Endothelial cell of umbilical vein (primary cell): ENCODE measurements at regions of chr5 and their contacts with region 1.

Region 1: DNA sequence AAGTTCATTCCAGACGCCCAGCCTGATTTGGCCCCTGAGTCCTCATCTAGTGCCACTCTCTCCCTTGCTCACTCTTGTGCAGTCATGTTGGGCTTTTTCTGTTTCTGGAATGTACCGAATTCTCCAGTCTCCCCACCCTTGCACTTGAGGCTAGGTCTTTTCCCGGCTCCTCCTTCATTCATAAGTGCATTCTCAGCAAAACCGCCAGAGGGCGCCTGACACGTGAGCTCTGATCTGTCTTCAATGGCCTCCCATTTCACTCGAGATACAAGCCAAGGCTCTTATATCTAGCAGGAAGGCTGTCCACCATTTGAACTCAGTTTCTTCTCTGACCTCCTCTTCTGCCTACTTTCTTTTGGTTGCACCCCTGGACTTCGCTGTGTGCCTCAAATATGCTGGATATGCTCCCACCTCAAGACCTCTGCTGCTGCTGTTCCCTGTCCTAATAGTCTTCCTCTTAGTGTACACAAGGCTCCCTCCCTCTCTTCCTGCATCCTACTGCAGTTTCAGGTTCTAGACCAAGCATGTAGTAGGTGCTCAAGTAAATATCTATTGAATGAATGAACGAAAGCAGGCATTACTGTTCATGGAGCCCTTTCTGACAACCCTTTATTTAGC is 568.1 kb upstream of the WWC1 start:
- DNase-seq: peak; percentile 61
- H3K4me3 ChIP-seq: no peak overlapping the region
- H3K27ac ChIP-seq: no peak overlapping the region
- H3K4me1 ChIP-seq: no peaks in the 10 kb centered on the region
- H3K27me3 ChIP-seq: no peaks in the 10 kb centered on the region
- CTCF ChIP-seq: peak; percentile 79 to 86
- POLR2A ChIP-seq: no peak

Region 2: DNA sequence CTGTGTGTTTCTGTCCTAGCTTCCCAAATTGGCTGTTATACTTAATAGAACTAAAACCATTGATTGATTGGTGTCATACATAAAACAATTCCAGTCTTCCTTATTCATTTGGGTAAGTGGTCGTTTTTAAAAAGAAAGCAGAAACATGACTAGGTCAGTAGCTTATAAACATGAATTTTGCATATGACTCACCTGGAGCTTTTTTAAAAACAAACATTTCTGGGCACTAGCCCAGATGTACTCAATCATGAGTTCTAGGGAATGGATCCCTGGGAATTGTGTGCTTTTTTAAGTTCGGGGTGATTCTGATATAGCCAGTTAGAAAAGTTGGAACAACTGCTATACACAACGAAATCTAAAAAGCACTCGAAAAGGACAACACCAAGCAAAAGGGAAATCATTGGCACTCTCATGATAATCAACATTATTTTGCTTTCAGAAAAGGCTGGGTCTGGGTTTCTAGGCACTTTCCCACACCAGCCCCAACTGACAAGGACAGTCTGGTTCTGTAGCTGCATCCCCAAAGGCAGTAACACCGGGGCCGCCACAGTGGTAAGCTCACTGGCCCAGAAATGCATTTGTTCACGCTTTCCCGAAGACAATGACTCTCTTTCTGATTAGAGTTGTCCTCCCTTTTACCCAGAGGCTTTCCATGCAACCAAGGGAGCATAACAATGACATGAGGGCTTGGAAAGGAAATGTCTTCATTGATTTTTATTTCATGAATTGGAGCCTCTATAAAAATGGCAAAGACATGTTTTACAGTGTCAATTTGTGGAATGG is 96.8 kb before region 1 on chr5:
- CTCF ChIA-PET with region 1: no interaction called
- POLR2A ChIA-PET with region 1: no interaction called
- dilution Hi-C with region 1: no loop called
- intact Hi-C with region 1: no loop called
- DNase-seq: no peak
- H3K4me3 ChIP-seq: no peak overlapping the region
- H3K27ac ChIP-seq: no peak overlapping the region
- H3K4me1 ChIP-seq: no peaks in the 10 kb centered on the region
- H3K27me3 ChIP-seq: no peaks in the 10 kb centered on the region
- CTCF ChIP-seq: no peak
- POLR2A ChIP-seq: no peak

Region 3: DNA sequence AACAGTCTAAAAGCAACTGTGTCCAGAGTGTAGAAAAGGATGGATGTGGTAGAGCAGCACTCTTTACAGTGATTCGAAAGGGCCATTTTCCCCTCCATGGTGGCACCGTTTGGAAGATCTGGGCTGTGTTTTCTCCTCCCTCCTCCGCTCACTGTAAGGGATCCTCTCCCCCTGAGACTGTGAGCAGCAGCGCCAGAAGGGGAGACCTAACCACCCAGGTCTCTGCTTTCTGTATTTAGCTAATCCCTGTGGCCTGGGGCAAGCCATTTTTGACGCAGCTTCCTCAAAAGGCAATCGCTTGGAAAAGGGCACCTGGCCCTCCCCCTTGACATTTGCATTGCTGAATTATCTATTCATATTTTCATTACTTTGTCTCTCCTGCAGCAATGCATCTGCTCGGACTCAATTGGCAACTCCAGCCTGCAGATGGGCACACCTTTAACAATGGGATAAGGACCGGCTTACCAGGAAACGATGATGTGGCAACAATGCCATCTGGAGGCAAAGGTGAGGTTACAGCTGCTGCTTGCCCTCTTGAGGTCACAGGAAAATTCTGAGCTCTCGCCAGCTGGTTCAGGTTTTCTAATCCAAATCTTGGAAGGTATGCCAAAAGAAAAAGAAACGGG is 323.8 kb after region 1 on chr5:
- CTCF ChIA-PET with region 1: no interaction called
- POLR2A ChIA-PET with region 1: no interaction called
- dilution Hi-C with region 1: no loop called
- intact Hi-C with region 1: loop called (anchors 1 kb)
- DNase-seq: no peak
- H3K4me3 ChIP-seq: no peak overlapping the region
- H3K27ac ChIP-seq: no peak overlapping the region
- H3K4me1 ChIP-seq: no peaks in the 10 kb centered on the region
- H3K27me3 ChIP-seq: no peaks in the 10 kb centered on the region
- CTCF ChIP-seq: no peak
- POLR2A ChIP-seq: no peak

Region 4: DNA sequence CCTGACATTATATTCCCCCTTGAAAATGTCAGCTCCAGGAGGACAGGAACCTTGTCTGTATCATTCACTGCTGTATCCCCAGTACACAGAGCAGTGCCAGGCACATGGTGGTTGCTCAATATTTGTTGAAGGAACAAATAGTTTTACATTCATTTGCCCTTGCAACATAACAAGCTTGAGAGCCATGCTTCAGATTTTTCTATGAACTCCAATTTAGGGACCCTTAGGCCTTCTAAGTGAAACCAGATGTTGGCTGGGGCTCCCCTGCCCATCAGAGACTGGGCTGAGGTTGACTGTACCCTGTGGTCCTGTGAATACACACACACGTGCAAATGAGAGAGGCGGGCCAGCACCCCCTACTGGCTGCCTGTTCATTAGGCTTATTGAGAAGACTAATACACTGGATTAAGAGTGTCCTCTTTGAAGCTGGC is 353.2 kb after region 1 on chr5:
- CTCF ChIA-PET with region 1: no interaction called
- POLR2A ChIA-PET with region 1: no interaction called
- dilution Hi-C with region 1: no loop called
- intact Hi-C with region 1: loop called (anchors 1 kb)
- DNase-seq: no peak
- H3K4me3 ChIP-seq: no peak overlapping the region
- H3K27ac ChIP-seq: no peak overlapping the region
- H3K4me1 ChIP-seq: no peaks in the 10 kb centered on the region
- H3K27me3 ChIP-seq: no peaks in the 10 kb centered on the region
- CTCF ChIP-seq: peak in 1 of 2 donors; percentile 4
- POLR2A ChIP-seq: no peak